CD8-positive, alpha-beta T cell (primary cell): ENCODE measurements at regions of chr14 and their contacts with region 1.

Region 1: GRCh38 chr14:24215495-24216344 is at the start of gene MDP1:
- DNase-seq: peak; percentile 75 to 96 (median 88)
- ATAC-seq: peak; percentile 72
- H3K4me3 ChIP-seq: peak within 1 kb of the TSS; percentile 86 to 95
- H3K4me3 Mint-ChIP-seq: peak within 1 kb of the TSS; percentile 93
- H3K27ac ChIP-seq: peak within 1 kb of the TSS; percentile 87 to 97
- H3K27ac Mint-ChIP-seq: peak within 1 kb of the TSS; percentile 99
- H3K4me1 ChIP-seq: peaks cover 32% of the 10 kb centered on the region
- H3K4me1 Mint-ChIP-seq: peaks cover 52% of the 10 kb centered on the region
- H3K27me3 ChIP-seq: no peaks in the 10 kb centered on the region
- H3K27me3 Mint-ChIP-seq: no peaks in the 10 kb centered on the region
- CTCF ChIP-seq: peak; percentile 63
- total RNA-seq, gene MDP1: 4.2 to 4.5 TPM

Region 2: DNA sequence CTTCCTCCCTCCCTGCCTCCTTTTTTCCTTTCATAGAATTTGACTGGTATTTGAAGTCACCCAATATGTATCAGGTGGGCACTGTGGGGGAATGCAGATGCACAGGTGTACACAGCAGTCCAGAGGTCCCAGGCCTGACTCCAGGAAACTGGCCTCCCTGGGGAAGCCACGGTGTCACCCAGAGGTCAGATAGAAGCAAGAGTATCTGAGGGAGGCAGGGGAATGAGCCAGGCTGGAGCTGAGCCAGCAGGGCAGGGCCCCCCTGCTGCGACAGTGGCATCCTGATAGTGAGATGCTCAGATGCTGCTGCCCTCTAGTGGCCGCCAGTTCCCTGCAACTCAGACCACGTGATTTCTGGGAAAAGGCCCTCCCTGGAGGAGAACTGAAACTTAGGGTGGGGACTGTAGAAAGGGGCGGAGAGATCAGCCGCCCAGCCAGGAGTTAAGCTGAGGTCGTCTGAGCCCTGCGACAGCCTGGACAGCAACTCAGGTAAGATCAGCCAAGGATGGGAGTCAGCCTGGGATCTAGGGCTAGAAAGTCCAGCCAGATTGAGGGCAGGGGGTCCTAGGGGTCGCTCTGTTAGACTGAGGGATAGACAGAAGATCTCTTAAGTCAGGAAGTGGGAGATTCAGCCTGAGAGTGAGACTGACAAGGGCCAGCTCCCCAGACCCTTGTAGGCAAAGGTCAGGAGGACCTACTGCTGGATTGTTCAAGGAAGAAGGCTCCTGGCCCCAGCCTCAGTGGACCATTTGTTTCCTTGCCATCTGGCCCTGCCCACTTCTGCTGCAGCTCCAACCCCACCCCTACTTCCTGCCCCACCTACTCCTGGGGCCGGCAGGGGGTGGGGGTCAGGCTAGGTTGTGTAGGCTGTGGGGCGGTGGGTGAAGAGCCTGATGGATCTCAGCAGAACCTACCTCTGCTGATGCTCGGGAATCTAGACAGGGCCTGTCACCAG is 54.6 kb before region 1 on chr14 and contains the start of gene IRF9:
- CTCF ChIA-PET with region 1: interaction called, 10 read pairs
- POLR2A ChIA-PET with region 1: interaction called, 8 read pairs
- intact Hi-C with region 1: loop called in 1 of 2 experiments (anchors 2 kb)
- DNase-seq: peak; percentile 95 to 99 (median 97)
- ATAC-seq: peak; percentile 85
- H3K4me3 ChIP-seq: peak within 1 kb of the TSS; percentile 80 to 90
- H3K4me3 Mint-ChIP-seq: peak within 1 kb of the TSS; percentile 99
- H3K27ac ChIP-seq: peak within 1 kb of the TSS; percentile 92 to 94
- H3K27ac Mint-ChIP-seq: peak within 1 kb of the TSS; percentile 99
- H3K4me1 ChIP-seq: peaks cover 47% of the 10 kb centered on the region
- H3K4me1 Mint-ChIP-seq: peaks cover 49% of the 10 kb centered on the region
- H3K27me3 ChIP-seq: no peaks in the 10 kb centered on the region
- H3K27me3 Mint-ChIP-seq: no peaks in the 10 kb centered on the region
- CTCF ChIP-seq: peak; percentile 92
- total RNA-seq, gene IRF9: 270 to 307 TPM

Region 3: DNA sequence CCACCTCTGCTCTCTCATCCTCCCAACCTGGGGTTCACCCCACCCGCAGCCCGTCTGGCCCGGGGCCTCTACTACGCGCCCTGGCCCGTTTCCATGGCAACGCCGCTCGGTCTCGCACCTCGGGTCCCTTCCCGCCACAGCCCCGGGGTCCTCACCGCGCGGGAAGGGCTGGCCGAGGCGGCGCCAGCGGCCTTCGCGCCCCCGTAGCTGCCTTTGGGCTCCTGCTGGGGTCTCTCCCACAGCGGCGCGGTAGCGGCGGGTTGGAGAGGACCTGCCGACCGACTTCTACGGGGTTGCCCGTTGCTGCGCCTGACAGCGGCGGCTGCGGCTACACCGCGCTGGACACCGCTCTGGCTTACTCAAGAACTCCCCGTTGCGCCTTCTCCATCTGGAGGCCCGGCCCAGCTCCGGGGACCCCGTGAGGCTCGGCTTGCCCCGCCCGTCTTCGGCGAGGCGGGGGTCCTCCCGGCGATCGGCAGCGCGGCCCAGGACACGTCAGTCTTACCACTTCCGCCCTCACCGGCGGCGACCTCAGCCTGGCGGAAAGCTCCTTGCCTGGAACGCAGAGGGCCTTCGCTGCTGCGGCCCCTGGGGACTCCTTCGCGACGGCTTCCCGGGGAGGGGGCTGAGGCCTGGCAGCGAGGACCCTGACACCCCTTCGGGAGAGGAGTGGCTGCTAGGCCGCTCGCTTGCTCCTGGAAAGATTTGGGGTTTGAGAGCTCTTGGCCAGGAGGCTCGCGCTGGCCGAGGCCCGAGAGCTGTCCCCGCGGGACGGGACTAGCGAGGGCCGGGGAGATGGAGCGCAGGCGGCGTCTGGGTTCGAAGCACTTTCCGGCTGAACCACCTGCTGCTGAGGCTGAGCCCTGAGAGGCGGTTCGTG is 20.3 kb before region 1 on chr14 and contains the start of gene TM9SF1:
- CTCF ChIA-PET with region 1: interaction called, 11 read pairs
- POLR2A ChIA-PET with region 1: interaction called, 50 read pairs
- intact Hi-C with region 1: loop called (anchors 1 kb)
- DNase-seq: peak; percentile 81 to 96 (median 91)
- ATAC-seq: peak; percentile 83
- H3K4me3 ChIP-seq: peak within 1 kb of the TSS; percentile 87 to 94
- H3K4me3 Mint-ChIP-seq: peak within 1 kb of the TSS; percentile 94
- H3K27ac ChIP-seq: peak within 1 kb of the TSS; percentile 99 to 100
- H3K27ac Mint-ChIP-seq: peak within 1 kb of the TSS; percentile 98
- H3K4me1 ChIP-seq: peaks cover 31% of the 10 kb centered on the region
- H3K4me1 Mint-ChIP-seq: peaks cover 50% of the 10 kb centered on the region
- H3K27me3 ChIP-seq: no peaks in the 10 kb centered on the region
- H3K27me3 Mint-ChIP-seq: no peaks in the 10 kb centered on the region
- CTCF ChIP-seq: no peak
- total RNA-seq, gene TM9SF1: 17.5 to 20.4 TPM

Region 4: DNA sequence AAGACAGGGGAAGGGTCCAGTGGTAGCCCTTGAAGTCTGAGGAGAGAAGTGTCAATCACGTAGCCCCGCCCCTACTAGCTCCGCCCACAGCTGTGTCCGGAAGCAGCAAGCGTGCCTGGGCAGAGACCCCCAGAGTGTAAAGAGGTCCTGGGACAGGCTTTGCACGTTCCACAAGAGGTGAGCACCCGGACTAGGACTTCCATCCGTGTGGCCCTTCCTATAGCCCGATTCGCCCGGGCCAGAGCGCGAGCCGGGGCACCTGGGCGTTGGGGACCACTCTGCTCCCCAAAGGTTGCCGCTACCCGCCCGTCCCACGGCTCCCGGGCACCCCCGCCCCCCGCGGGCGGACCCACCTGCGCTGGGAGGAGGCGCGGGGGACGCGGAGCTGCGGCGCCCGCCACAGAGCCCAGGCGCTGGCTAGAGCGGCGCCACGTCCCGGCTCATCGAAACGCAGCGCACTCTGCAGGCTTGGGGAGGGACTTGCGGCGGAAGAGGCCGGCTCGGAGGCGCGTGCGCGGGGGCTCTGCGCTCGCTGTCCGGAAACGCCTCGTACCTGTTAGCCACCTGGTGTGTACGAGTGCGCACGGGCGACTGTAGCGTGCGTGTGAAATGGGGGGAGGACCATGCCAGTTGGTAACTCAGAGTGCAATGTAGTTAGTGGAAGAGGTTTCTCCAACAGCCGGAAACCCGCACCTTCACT is 55.6 kb after region 1 on chr14 and contains the start of gene RABGGTA:
- CTCF ChIA-PET with region 1: interaction called, 4 read pairs
- POLR2A ChIA-PET with region 1: interaction called, 8 read pairs
- intact Hi-C with region 1: loop called (anchors 1 kb)
- DNase-seq: peak; percentile 85 to 99 (median 91)
- ATAC-seq: peak; percentile 84
- H3K4me3 ChIP-seq: peak within 1 kb of the TSS; percentile 81 to 90
- H3K4me3 Mint-ChIP-seq: peak within 1 kb of the TSS; percentile 91
- H3K27ac ChIP-seq: peak within 1 kb of the TSS; percentile 93 to 97
- H3K27ac Mint-ChIP-seq: peak within 1 kb of the TSS; percentile 98
- H3K4me1 ChIP-seq: peaks cover 31% of the 10 kb centered on the region
- H3K4me1 Mint-ChIP-seq: peaks cover 36% of the 10 kb centered on the region
- H3K27me3 ChIP-seq: no peaks in the 10 kb centered on the region
- H3K27me3 Mint-ChIP-seq: no peaks in the 10 kb centered on the region
- CTCF ChIP-seq: peak; percentile 50
- total RNA-seq, gene RABGGTA: 59.1 to 65.9 TPM

Region 5: GRCh38 chr14:24289649-24290249 is 74.0 kb after region 1 on chr14:
- CTCF ChIA-PET with region 1: no interaction called
- POLR2A ChIA-PET with region 1: no interaction called
- intact Hi-C with region 1: no loop called
- DNase-seq: peak in 4 of 9 experiments; percentile 3 to 65 (median 20)
- ATAC-seq: peak; percentile 31
- H3K4me3 ChIP-seq: no peak overlapping the region
- H3K4me3 Mint-ChIP-seq: no peak overlapping the region
- H3K27ac ChIP-seq: no peak overlapping the region
- H3K27ac Mint-ChIP-seq: no peak overlapping the region
- H3K4me1 ChIP-seq: peaks cover 10% of the 10 kb centered on the region
- H3K4me1 Mint-ChIP-seq: peaks cover 2% of the 10 kb centered on the region
- H3K27me3 ChIP-seq: no peaks in the 10 kb centered on the region
- H3K27me3 Mint-ChIP-seq: no peaks in the 10 kb centered on the region
- CTCF ChIP-seq: no peak

Region 6: GRCh38 chr14:24431569-24432258 is 216.0 kb after region 1 on chr14:
- CTCF ChIA-PET with region 1: interaction called, 8 read pairs
- POLR2A ChIA-PET with region 1: interaction called, 6 read pairs
- intact Hi-C with region 1: loop called in 1 of 2 experiments (anchors 2 kb)
- DNase-seq: peak; percentile 77 to 94 (median 90)
- ATAC-seq: peak; percentile 52
- H3K4me3 ChIP-seq: peak overlapping the region in 1 of 2 experiments; percentile 71
- H3K4me3 Mint-ChIP-seq: peak overlapping the region; percentile 93
- H3K27ac ChIP-seq: peak overlapping the region; percentile 31 to 90
- H3K27ac Mint-ChIP-seq: peak overlapping the region; percentile 98
- H3K4me1 ChIP-seq: peaks cover 47% of the 10 kb centered on the region
- H3K4me1 Mint-ChIP-seq: peaks cover 45% of the 10 kb centered on the region
- H3K27me3 ChIP-seq: no peaks in the 10 kb centered on the region
- H3K27me3 Mint-ChIP-seq: no peaks in the 10 kb centered on the region
- CTCF ChIP-seq: peak; percentile 83

Region 7: GRCh38 chr14:25009891-25010290 is 794.2 kb after region 1 on chr14:
- CTCF ChIA-PET with region 1: no interaction called
- POLR2A ChIA-PET with region 1: no interaction called
- intact Hi-C with region 1: no loop called
- DNase-seq: no peak
- ATAC-seq: no peak
- H3K4me3 ChIP-seq: no peak overlapping the region
- H3K4me3 Mint-ChIP-seq: no peak overlapping the region
- H3K27ac ChIP-seq: no peak overlapping the region
- H3K27ac Mint-ChIP-seq: no peak overlapping the region
- H3K4me1 ChIP-seq: no peaks in the 10 kb centered on the region
- H3K4me1 Mint-ChIP-seq: no peaks in the 10 kb centered on the region
- H3K27me3 ChIP-seq: no peaks in the 10 kb centered on the region
- H3K27me3 Mint-ChIP-seq: peaks cover 3% of the 10 kb centered on the region
- CTCF ChIP-seq: no peak